ENCODE measurements at regions of chr1 and their contacts with region 1.

Region 1: DNA sequence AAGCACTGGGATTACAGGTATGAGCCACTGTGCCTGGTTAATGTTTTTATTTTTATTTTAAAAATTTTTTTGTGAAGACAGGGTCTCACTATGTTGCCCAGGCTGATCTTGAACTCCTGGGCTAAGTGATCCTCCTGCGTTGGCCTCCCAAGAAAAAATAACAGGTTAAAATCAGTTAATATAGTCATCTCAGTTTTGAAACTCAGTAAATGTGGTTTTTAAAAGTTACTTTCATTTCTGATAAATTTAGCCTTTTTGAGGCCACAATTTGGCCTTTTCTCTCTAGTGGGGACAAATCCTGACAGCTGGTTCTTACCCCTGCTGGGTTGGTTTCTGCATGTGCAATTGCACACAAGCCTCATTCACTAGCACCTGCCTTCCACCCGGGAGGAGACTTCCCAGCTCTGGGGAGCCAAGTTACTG is 13.3 kb downstream of the PMF1 start:
- DNase-seq: no peak
- ATAC-seq: no peak
- H3K4me3 ChIP-seq: no peak overlapping the region
- H3K27ac ChIP-seq: peak overlapping the region in 1 of 10 donors; percentile 3
- H3K4me1 ChIP-seq: peaks cover 0 to 9% (median 4%) of the 10 kb centered on the region in 9 donors
- H3K27me3 ChIP-seq: no peaks in the 10 kb centered on the region
- CTCF ChIP-seq: no peak

Region 2: DNA sequence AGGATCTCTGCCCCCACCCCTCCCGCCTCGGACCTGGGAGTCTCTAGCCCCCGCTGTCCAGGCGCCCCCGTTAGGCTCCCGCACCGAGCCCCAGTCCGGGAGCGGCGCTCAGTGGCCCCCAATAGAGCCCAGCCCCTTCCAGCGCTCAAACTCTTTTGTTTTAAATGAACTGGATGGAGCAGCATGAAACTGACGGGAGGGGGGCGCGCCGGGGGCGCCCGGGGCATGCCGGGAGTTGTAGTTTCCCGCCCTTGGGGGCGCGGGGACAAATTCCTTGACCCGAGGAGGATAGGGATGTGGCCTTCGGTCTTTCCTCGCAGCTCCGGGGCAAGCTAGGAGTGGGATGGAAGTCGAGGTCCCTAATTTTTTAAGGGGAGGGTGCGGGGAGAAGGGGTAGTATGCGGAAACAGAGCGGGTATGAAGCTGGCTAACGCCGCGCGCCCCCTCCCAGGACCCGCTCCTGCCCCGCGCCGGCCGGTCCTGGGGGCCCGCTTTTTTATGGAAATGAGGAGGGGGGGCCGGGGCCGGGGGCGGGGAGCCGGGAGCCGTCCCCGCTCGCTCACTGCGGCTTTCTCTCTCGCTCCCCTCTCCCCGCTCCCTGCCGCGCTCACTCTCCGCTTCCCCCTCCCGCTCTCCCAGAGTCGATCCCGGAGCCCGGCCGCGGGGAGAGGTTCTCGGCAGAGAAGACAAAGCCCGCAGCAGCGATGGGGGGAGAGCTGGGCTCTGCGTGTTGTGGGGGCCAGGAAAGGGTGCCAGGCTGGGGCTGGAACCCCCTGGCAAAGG is 143.6 kb before region 1 on chr1 and contains the start of gene MEX3A:
- intact Hi-C with region 1: no loop called
- DNase-seq: peak; percentile 76 to 78
- ATAC-seq: peak; percentile 80 to 88 (median 86)
- H3K4me3 ChIP-seq: peak within 1 kb of the TSS; percentile 67 to 90 (median 79)
- H3K27ac ChIP-seq: peak within 1 kb of the TSS in 7 of 10 donors; percentile 6 to 73 (median 58)
- H3K4me1 ChIP-seq: peaks cover 4 to 40% (median 23%) of the 10 kb centered on the region in 9 donors
- H3K27me3 ChIP-seq: peaks cover 0 to 31% (median 0%) of the 10 kb centered on the region in 7 donors
- CTCF ChIP-seq: no peak
- total RNA-seq, gene MEX3A: 0.09 to 0.31 (median 0.19) TPM

Region 3: GRCh38 chr1:156104065-156104810 is 121.9 kb before region 1 on chr1:
- intact Hi-C with region 1: no loop called
- DNase-seq: peak; percentile 76 to 88
- ATAC-seq: peak; percentile 66 to 80 (median 75)
- H3K4me3 ChIP-seq: peak overlapping the region in 2 of 10 donors; percentile 5 to 13
- H3K27ac ChIP-seq: peak overlapping the region; percentile 79 to 98 (median 95)
- H3K4me1 ChIP-seq: peaks cover 47 to 85% (median 71%) of the 10 kb centered on the region in 9 donors
- H3K27me3 ChIP-seq: no peaks in the 10 kb centered on the region
- CTCF ChIP-seq: no peak

Region 4: GRCh38 chr1:156136970-156137483 is 89.1 kb before region 1 on chr1:
- intact Hi-C with region 1: loop called in 1 of 10 experiments (anchors 5 kb)
- DNase-seq: no peak
- ATAC-seq: no peak
- H3K4me3 ChIP-seq: no peak overlapping the region
- H3K27ac ChIP-seq: no peak overlapping the region
- H3K4me1 ChIP-seq: peaks cover 0 to 46% (median 5%) of the 10 kb centered on the region in 9 donors
- H3K27me3 ChIP-seq: no peaks in the 10 kb centered on the region
- CTCF ChIP-seq: peak in 1 of 9 donors; percentile 13

Region 5: DNA sequence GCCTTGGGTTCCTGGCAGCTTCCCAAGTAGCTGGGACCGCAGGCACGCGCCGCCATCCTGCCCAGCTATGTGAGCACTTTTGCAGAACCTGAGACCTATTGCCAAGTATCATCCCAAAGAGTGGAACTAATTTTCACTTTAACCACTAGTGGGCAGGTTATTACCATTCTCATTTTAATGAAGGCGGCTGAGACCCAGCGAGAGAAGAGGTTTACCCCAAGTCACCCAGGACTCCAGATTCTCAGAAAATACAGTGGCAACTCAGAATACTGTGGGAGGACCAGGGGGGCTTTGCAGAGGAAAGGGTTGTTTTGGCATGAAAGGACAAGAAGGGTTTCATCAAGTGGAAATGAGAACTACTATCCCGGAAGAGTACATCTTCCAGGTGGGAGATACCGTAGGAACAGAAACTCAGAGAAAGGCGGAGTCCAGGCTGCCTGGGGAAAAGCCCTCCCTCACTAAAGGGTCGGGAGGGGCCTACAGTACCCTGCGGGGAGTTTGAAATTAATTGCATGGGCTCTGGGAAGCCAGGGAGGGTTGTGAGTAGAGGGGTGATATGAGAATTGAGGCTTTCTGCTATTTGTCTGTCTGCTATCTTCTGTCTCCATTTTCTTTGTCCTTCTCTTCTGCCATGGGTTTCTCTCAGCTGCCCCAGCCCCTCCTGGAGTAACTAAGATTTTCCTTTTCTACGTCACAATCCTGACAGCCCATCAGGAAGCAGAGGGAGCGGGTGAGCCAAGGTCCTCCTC is 79.9 kb before region 1 on chr1:
- intact Hi-C with region 1: loop called (anchors 1 to 5 kb)
- DNase-seq: peak; percentile 67 to 81
- ATAC-seq: peak; percentile 18 to 67 (median 58)
- H3K4me3 ChIP-seq: peak overlapping the region in 4 of 10 donors; percentile 0 to 28 (median 9)
- H3K27ac ChIP-seq: peak overlapping the region in 3 of 10 donors; percentile 2 to 89 (median 3)
- H3K4me1 ChIP-seq: peaks cover 4 to 54% (median 20%) of the 10 kb centered on the region in 9 donors
- H3K27me3 ChIP-seq: peaks cover 0 to 19% (median 18%) of the 10 kb centered on the region in 7 donors
- CTCF ChIP-seq: peak; percentile 36 to 78 (median 71)

Region 6: GRCh38 chr1:156165083-156165482 is 61.0 kb before region 1 on chr1:
- intact Hi-C with region 1: no loop called
- DNase-seq: no peak
- ATAC-seq: no peak
- H3K4me3 ChIP-seq: no peak overlapping the region
- H3K27ac ChIP-seq: peak overlapping the region in 1 of 10 donors; percentile 44
- H3K4me1 ChIP-seq: peaks cover under 1 to 49% (median 28%) of the 10 kb centered on the region in 9 donors
- H3K27me3 ChIP-seq: no peaks in the 10 kb centered on the region
- CTCF ChIP-seq: no peak